Right ventricle myocardium inferior (tissue), 1 donor: ENCODE measurements at regions of chr5 and their contacts with region 1.

Region 1: GRCh38 chr5:156815988-156816599 is 34.0 kb upstream of the PPP1R2B start:
- DNase-seq: no peak
- ATAC-seq: no peak

Region 2: DNA sequence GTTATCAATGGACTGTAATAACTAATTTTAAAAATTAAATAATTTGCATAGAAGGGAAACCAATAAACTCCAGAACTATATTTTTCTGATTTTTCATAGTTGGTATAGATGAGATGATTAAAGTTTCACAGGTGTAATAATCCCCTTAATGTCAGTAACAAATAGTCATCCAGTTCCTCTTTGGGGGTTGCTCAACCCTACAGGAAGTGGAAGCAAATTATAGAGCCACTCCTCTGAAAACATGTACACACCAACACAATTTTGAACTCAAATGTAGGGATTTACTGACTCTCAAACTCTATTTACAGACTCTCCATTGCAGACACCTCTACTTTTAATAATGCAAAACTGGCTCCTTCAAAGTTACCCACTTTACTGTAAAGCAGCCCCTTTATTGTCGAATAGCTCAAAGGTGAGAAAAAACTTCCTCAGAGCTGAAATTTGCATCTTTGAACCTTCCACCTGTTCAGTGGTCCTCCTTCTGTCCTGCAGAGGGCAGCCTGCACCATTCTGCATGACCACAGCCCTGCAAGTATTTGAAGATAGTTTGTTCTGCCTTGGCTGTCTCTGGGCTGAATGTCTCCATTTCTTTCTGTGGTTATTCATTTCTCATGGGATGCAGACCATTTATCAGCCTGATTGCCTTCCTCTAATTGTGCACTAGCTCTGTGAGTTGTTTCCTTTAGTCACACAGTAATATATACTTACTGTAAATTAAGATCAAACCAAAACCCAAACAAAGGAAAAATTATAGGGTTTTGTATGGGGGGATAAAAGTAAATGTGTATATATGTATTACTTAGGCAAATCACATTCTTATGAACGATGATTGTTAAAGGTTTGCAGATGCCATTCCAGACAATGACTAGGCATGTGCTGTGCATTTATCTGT is 872.3 kb before region 1 on chr5:
- intact Hi-C with region 1: loop called (anchors 5 kb)
- DNase-seq: peak; percentile 50
- ATAC-seq: peak; percentile 72